Mammary epithelial cell (primary cell): ENCODE measurements at regions of chr17 and their contacts with region 1.

Region 1: GRCh38 chr17:76868176-76868668 is at the start of gene MGAT5B:
- DNase-seq: peak; percentile 61
- H3K4me3 ChIP-seq: peak within 1 kb of the TSS in 2 of 3 experiments; percentile 19 to 55
- H3K27ac ChIP-seq: no peak within 1 kb of the TSS
- H3K4me1 ChIP-seq: peaks cover 48% of the 10 kb centered on the region
- H3K27me3 ChIP-seq: no peaks in the 10 kb centered on the region
- CTCF ChIP-seq: peak; percentile 55 to 62
- total RNA-seq, gene MGAT5B: 0.89 to 1.3 TPM

Region 2: DNA sequence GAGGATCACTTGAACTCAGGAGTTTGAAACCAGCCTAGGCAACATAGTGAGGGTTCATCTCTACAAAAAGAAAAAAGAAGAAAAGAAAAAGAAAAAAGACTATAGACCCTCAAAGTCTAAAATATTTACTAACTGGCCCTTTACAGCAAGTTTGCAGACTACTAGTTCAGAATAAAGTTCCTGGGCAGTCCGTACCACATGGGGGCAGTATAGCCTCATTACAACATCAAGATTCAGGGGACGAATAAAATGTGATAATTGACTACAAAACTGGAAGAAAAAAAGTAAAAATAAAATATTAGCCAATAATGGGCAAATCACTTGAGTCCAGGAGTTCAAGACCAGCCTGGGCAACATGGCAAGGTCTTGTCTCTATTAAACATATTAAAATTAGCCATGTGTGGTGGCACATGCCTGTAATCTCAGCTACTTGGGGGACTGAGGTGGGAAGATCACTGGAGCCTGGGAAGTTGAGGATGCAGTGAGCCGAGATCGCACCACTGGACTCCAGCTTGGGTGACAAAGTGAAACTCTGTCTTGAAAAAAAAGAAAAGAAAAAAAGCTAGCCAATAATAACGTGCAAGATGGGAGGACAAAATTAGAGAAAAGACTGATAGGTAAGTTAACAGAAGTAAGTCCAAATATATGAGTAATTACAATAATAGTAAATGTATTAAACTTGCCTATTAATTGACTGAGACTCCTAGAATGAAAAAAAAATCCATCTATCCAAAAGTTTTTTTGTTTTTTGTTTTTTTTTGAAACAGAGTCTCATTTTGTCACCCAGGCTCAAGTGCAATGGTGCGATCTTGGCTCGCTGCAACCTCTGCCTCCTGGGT is 143.2 kb after region 1 on chr17:
- CTCF ChIA-PET with region 1: no interaction called
- dilution Hi-C with region 1: no loop called
- in situ Hi-C with region 1: no loop called
- intact Hi-C with region 1: loop called (anchors 1 kb)
- DNase-seq: peak; percentile 34
- H3K4me3 ChIP-seq: no peak overlapping the region
- H3K27ac ChIP-seq: no peak overlapping the region
- H3K4me1 ChIP-seq: no peaks in the 10 kb centered on the region
- H3K27me3 ChIP-seq: peaks cover 7% of the 10 kb centered on the region
- CTCF ChIP-seq: peak; percentile 82 to 85

Region 3: DNA sequence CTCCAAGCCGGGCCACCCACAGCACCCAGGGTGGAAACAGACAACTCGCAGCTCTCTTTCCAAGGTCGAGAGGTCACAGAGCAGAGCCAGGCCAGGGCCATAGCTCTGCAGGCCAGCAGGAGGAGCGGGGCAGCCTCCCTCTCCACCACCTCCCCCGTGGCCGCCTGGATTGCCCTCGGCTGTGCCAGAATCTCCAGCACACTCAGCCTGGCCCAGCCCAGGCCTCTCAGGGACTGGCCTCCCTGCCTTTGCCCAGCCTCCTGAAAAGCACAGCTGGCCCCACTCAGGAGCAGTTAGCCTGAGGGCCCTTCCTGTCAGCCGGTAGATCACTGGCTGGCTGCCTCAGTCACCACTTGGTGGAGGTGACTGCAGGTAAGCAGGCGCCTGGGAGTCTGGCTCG is 186.7 kb after region 1 on chr17:
- CTCF ChIA-PET with region 1: no interaction called
- dilution Hi-C with region 1: no loop called
- in situ Hi-C with region 1: loop called (anchors 10 kb)
- intact Hi-C with region 1: loop called (anchors 1 kb)
- DNase-seq: no peak
- H3K4me3 ChIP-seq: no peak overlapping the region
- H3K27ac ChIP-seq: no peak overlapping the region
- H3K4me1 ChIP-seq: no peaks in the 10 kb centered on the region
- H3K27me3 ChIP-seq: no peaks in the 10 kb centered on the region
- CTCF ChIP-seq: no peak

Region 4: GRCh38 chr17:77061669-77062068 is 193.4 kb after region 1 on chr17:
- CTCF ChIA-PET with region 1: interaction called, 6 read pairs
- dilution Hi-C with region 1: no loop called
- in situ Hi-C with region 1: loop called (anchors 10 kb)
- intact Hi-C with region 1: loop called (anchors 1 kb)
- DNase-seq: no peak
- H3K4me3 ChIP-seq: no peak overlapping the region
- H3K27ac ChIP-seq: no peak overlapping the region
- H3K4me1 ChIP-seq: no peaks in the 10 kb centered on the region
- H3K27me3 ChIP-seq: no peaks in the 10 kb centered on the region
- CTCF ChIP-seq: no peak

Region 5: DNA sequence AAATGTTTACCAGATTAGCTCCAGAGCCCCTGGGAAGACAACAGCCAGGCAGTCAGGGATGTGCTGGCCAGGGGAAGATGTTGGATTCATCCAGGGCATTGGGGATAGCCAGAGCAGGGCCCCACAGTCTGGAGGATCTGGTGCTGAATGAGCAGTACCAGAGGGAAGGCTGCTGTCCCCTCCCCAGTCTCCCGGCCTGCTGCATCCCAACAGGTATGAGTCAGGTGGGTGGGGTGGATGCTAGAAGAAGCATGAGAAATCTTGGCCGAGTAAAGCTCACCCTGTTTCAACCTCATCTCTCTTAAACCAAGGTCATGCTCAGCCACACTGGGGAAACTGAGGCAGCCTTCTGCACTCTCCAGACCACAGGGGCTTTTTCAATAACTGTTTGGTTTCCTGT is 200.7 kb after region 1 on chr17:
- CTCF ChIA-PET with region 1: interaction called, 6 read pairs
- dilution Hi-C with region 1: no loop called
- in situ Hi-C with region 1: loop called (anchors 10 kb)
- intact Hi-C with region 1: loop called (anchors 1 kb)
- DNase-seq: peak; percentile 54
- H3K4me3 ChIP-seq: no peak overlapping the region
- H3K27ac ChIP-seq: no peak overlapping the region
- H3K4me1 ChIP-seq: peaks cover 9% of the 10 kb centered on the region
- H3K27me3 ChIP-seq: peaks cover 5% of the 10 kb centered on the region
- CTCF ChIP-seq: no peak

Region 6: GRCh38 chr17:77088455-77089123 is 220.4 kb after region 1 on chr17:
- CTCF ChIA-PET with region 1: no interaction called
- dilution Hi-C with region 1: no loop called
- in situ Hi-C with region 1: no loop called
- intact Hi-C with region 1: no loop called
- DNase-seq: peak; percentile 92
- H3K4me3 ChIP-seq: peak overlapping the region; percentile 62 to 76 (median 68)
- H3K27ac ChIP-seq: peak overlapping the region; percentile 88
- H3K4me1 ChIP-seq: peaks cover 14% of the 10 kb centered on the region
- H3K27me3 ChIP-seq: no peaks in the 10 kb centered on the region
- CTCF ChIP-seq: peak; percentile 48 to 53

Region 7: GRCh38 chr17:77247048-77247541 is 378.9 kb after region 1 on chr17:
- CTCF ChIA-PET with region 1: no interaction called
- dilution Hi-C with region 1: no loop called
- in situ Hi-C with region 1: loop called in 1 of 2 experiments (anchors 25 kb)
- intact Hi-C with region 1: loop called (anchors 2 kb)
- DNase-seq: peak; percentile 47
- H3K4me3 ChIP-seq: peak overlapping the region; percentile 43 to 61 (median 47)
- H3K27ac ChIP-seq: no peak overlapping the region
- H3K4me1 ChIP-seq: peaks cover 8% of the 10 kb centered on the region
- H3K27me3 ChIP-seq: no peaks in the 10 kb centered on the region
- CTCF ChIP-seq: peak; percentile 55 to 88